Ascending aorta (tissue), 2 donors: ENCODE measurements at regions of chr3 and their contacts with region 1.

Region 1: GRCh38 chr3:194682694-194683310 is 2.9 kb upstream of the FAM43A start:
- DNase-seq: peak; percentile 37 to 85
- H3K4me3 ChIP-seq: no peak overlapping the region
- H3K27ac ChIP-seq: peak overlapping the region; percentile 4 to 31
- H3K4me1 ChIP-seq: peaks cover 9 to 12% of the 10 kb centered on the region in 2 donors
- H3K27me3 ChIP-seq: no peaks in the 10 kb centered on the region
- CTCF ChIP-seq: peak; percentile 78 to 89 (median 87)

Region 2: DNA sequence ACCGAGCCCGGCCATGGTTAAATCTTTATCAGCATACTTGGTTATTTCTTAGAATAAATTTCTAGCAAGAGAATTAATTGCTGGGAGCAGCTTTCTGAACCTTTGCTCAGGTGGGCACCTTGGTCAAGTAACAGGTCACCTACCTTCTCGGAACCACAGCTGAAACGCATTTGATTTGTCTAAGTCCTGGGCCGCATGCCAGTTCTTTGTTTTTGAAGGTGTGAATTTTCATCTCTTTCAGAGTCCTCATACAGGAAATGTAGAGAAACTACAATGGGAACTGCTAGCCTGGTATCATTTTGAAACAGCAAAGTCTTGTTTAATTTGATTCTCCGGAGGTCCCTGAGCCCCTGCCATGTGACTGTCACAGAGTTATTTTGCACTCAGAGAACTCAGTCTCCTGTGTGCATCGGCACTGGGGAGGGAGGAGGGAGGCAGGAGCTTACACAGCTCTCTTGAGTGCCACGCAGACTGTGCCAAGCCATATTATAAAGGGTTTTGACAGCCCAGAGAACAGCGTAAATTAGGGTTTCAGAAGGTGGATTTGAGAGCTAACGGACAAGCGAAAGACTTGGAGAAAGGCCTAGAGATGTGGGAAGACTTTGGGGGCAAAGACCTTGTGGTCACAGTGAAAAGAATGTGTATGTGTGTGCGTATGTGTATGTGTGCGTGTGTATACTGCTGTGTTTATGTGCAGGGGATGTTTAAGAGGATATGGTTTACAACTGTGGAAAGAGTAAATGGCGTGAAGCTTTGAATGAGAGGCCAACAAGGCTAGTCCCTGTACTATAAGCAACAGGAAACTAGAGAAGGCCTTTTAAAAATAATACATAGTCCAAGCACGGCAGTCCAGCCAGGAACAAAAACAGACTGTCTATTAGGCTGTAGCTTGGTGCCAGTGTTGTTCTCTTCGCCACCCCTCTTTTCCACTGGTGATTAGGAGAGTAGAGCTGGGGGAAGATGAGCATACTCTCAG is 134.2 kb before region 1 on chr3:
- intact Hi-C with region 1: no loop called
- DNase-seq: no peak
- H3K4me3 ChIP-seq: peak overlapping the region in 1 of 2 donors; percentile 10
- H3K27ac ChIP-seq: peak overlapping the region; percentile 62 to 86
- H3K4me1 ChIP-seq: peaks cover 4 to 23% of the 10 kb centered on the region in 2 donors
- H3K27me3 ChIP-seq: no peaks in the 10 kb centered on the region
- CTCF ChIP-seq: no peak

Region 3: GRCh38 chr3:194671900-194672808 is 10.6 kb before region 1 on chr3 and contains the start of gene LSG1:
- intact Hi-C with region 1: loop called (anchors 2 kb)
- DNase-seq: peak; percentile 44 to 95
- H3K4me3 ChIP-seq: peak within 1 kb of the TSS; percentile 80 to 96
- H3K27ac ChIP-seq: peak within 1 kb of the TSS; percentile 83 to 89
- H3K4me1 ChIP-seq: peaks cover 0 to 10% of the 10 kb centered on the region in 2 donors
- H3K27me3 ChIP-seq: no peaks in the 10 kb centered on the region
- CTCF ChIP-seq: no peak
- total RNA-seq, gene LSG1: 9.4 TPM

Region 4: DNA sequence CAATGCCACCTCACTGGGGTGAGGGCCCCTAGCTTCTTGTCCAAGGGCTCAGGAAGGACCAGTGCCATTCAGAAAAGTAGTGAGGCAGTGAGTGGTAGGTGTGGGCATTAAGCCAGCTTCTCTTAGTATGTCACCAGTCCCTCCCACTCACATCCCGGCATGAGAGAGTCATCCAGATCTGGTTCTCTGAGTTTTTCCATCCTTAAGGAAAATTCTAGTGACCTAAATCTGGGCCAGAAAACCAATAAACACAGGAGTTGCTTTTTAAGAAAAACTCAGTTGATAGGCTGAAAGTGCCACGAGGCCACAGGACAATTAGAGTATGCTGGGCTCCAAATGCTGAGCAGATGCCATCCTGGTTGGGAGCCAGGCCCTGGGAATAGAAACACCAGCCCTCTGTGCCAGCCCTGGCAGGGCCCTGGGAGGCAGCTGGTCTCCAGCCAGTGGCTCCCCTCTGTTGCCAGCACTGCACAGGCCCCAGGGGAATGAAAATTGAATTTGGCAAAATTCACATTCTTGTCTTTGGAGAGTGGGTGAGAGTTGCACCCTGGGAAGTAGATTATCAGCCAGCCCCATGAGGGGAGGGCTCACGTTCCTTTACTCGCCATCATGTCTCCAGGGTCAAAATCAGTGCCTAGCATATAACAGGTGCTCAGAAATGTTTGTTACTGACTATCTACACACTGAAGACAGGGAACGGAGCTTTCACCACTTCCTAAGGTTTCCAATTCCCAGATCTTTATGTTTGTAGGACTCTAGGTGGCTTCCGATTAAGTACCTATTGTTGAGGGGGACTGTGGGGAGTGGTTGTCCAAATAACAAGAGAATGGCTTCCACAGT is 55.7 kb after region 1 on chr3:
- intact Hi-C with region 1: loop called (anchors 2 kb)
- DNase-seq: peak; percentile 37 to 88
- H3K4me3 ChIP-seq: no peak overlapping the region
- H3K27ac ChIP-seq: peak overlapping the region in 1 of 2 donors; percentile 13
- H3K4me1 ChIP-seq: peaks cover 3 to 21% of the 10 kb centered on the region in 2 donors
- H3K27me3 ChIP-seq: no peaks in the 10 kb centered on the region
- CTCF ChIP-seq: no peak

Region 5: GRCh38 chr3:194769020-194769643 is 86.3 kb after region 1 on chr3:
- intact Hi-C with region 1: loop called (anchors 1 kb)
- DNase-seq: peak; percentile 85 to 95
- H3K4me3 ChIP-seq: peak overlapping the region; percentile 36 to 62
- H3K27ac ChIP-seq: no peak overlapping the region
- H3K4me1 ChIP-seq: peaks cover 0 to 9% of the 10 kb centered on the region in 2 donors
- H3K27me3 ChIP-seq: no peaks in the 10 kb centered on the region
- CTCF ChIP-seq: no peak

Region 6: GRCh38 chr3:194976049-194976451 is 293.2 kb after region 1 on chr3:
- intact Hi-C with region 1: loop called (anchors 5 kb)
- DNase-seq: peak in 1 of 2 donors; percentile 83
- H3K4me3 ChIP-seq: no peak overlapping the region
- H3K27ac ChIP-seq: peak overlapping the region; percentile 67 to 76
- H3K4me1 ChIP-seq: peaks cover 14 to 17% of the 10 kb centered on the region in 2 donors
- H3K27me3 ChIP-seq: no peaks in the 10 kb centered on the region
- CTCF ChIP-seq: no peak

Region 7: DNA sequence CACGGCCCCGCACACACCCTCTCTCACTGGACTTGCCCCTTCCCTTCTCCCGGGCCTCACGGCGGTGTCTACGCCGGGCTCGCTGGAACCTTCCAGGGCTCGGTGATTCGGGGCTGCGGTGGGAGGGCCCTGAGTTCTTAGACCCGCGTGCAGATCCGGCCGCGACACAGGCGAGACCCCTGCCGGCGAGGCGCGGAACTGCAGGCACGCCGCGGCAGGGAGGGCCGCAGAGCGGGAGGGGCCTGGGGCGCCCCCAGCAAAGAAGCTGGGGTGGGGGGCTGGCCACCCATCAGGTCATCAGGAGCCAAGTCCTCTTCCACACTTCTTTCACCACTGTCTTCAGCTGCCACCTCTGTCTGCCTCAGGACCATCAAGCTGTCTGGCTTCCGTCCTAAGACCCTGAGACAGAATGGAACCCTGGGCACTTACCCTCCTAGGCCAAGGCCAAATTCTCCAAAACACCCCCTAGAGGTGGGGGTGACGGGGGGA is 423.7 kb after region 1 on chr3:
- intact Hi-C with region 1: loop called (anchors 1 kb)
- DNase-seq: peak in 1 of 2 donors; percentile 80
- H3K4me3 ChIP-seq: peak overlapping the region in 1 of 2 donors; percentile 40
- H3K27ac ChIP-seq: no peak overlapping the region
- H3K4me1 ChIP-seq: peaks cover 0 to 5% of the 10 kb centered on the region in 2 donors
- H3K27me3 ChIP-seq: no peaks in the 10 kb centered on the region
- CTCF ChIP-seq: peak; percentile 96 to 100 (median 100)

Region 8: DNA sequence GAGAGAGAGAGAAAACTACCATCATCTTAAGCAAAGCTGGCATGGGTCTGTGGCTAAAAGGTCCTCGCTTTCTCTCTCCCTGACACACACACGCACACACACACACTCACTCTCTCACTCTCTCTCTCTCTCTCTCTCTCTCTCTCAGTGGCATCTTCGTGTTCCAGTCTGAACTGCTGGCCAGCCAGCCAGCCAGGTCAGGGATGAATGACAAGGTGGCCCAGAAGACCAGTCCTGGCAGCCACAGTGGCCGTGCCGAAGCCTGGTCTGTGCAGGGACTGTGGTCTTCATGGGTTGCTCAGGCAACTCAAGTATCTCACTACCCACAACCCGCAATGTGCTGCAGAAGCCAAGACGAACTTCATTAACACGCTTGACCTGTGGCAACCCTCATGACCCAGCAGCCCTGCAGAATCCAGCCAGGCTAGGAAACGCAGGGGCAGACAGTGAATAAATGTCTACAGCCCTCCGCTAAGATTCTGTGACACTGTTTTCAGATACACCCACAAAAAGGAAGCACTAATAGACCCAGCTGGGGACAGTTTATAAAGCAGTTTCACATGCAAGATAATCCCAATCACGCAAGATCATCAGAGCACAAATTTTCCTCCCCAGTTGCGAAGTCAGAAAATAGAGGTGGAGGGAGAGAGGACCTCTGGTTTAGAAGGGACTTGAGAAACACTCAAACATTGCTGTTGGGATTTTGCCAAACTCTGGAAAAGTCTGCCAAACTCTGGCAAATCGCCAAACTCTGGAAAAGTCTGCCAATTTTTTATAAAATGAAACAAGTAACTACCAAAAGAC is 521.8 kb after region 1 on chr3:
- intact Hi-C with region 1: no loop called
- DNase-seq: no peak
- H3K4me3 ChIP-seq: no peak overlapping the region
- H3K27ac ChIP-seq: no peak overlapping the region
- H3K4me1 ChIP-seq: peaks cover 3 to 15% of the 10 kb centered on the region in 2 donors
- H3K27me3 ChIP-seq: no peaks in the 10 kb centered on the region
- CTCF ChIP-seq: no peak